ENCODE measurements at regions of chr4 and their contacts with region 1.

Region 1: GRCh38 chr4:129641179-129641578 is 545.2 kb downstream of the C4orf33 start:
- DNase-seq: peak; percentile 13
- H3K4me3 Mint-ChIP-seq: no peak overlapping the region
- H3K27ac Mint-ChIP-seq: no peak overlapping the region
- H3K4me1 Mint-ChIP-seq: no peaks in the 10 kb centered on the region
- H3K27me3 Mint-ChIP-seq: no peaks in the 10 kb centered on the region

Region 2: DNA sequence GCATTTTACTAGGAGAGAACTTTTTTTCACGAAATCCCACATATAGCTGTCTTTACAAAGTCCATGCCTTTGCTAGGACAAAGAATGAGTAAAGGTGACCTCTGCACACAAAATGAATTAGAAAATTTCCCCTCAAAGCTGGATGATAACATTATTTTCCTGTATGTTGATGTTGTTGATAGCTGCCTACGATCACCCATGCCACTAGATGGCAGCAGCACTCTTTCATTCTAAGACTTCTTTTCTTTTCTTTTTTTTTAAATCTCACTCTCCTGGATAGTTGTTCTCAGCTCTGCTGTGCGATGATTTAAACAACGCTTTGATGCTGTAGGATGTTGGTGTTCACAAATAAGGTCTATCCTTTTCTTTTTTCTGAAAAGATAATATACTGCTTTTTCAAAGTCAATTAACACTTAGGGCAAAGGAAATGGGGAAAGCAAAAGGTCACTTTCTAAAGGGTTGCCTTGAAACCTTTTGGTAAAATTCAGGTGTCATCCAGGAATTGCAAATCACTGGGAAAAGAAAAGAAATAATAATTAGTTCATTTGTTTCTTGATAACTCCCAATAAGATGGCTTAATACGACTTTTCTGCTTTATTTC is 278.4 kb before region 1 on chr4:
- intact Hi-C with region 1: loop called (anchors 1 kb)
- DNase-seq: peak; percentile 11
- H3K4me3 Mint-ChIP-seq: no peak overlapping the region
- H3K27ac Mint-ChIP-seq: no peak overlapping the region
- H3K4me1 Mint-ChIP-seq: peaks cover 2% of the 10 kb centered on the region
- H3K27me3 Mint-ChIP-seq: peaks cover 2% of the 10 kb centered on the region

Region 3: GRCh38 chr4:129929052-129929451 is 287.9 kb after region 1 on chr4:
- intact Hi-C with region 1: no loop called
- DNase-seq: no peak
- H3K4me3 Mint-ChIP-seq: no peak overlapping the region
- H3K27ac Mint-ChIP-seq: no peak overlapping the region
- H3K4me1 Mint-ChIP-seq: no peaks in the 10 kb centered on the region
- H3K27me3 Mint-ChIP-seq: no peaks in the 10 kb centered on the region